ENCODE measurements at regions of chr5 and their contacts with region 1.

Region 1: DNA sequence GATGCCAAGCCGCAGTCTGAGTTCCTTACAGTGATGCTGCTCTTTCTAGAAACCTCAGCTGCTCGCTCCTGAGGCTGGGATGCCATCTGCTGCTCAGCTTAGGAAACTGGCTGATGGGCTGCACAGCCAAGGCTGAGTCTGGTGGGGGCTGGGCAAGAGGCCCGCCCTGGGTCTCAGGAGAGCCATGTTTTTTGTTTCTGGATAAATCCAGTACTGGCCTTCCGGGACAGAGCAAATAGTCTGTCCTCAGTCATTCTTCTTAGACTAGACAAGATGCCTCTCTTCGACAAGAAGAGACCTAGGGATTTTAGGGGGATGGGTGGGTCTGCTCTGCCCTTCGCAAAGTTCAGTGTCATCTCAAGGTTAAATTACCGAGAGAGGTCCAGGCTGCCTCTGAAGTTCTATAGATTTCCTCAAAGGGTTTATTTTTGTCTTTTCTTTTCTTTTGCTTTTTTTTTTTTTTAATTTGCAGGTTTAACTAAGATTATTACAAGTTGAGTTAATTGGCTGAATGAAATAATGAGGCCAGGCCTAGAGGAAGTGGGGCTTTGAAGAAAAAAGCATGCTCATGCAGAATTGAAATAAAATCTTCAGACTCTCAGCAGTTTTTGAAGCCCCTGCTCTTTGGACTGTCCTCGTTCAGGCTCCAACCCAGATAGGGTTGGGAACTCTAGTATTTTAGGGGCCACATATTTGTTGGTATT is 30.6 kb upstream of the MATR3 start:
- DNase-seq: peak; percentile 93
- H3K4me3 ChIP-seq: no peak overlapping the region
- H3K27ac ChIP-seq: peak overlapping the region in 3 of 4 donors; percentile 33 to 64 (median 50)
- H3K4me1 ChIP-seq: peaks cover 10 to 18% (median 15%) of the 10 kb centered on the region in 4 donors
- H3K27me3 ChIP-seq: no peaks in the 10 kb centered on the region
- CTCF ChIP-seq: peak; percentile 90 to 98 (median 93)
- EP300 ChIP-seq: no peak
- POLR2A ChIP-seq: no peak

Region 2: DNA sequence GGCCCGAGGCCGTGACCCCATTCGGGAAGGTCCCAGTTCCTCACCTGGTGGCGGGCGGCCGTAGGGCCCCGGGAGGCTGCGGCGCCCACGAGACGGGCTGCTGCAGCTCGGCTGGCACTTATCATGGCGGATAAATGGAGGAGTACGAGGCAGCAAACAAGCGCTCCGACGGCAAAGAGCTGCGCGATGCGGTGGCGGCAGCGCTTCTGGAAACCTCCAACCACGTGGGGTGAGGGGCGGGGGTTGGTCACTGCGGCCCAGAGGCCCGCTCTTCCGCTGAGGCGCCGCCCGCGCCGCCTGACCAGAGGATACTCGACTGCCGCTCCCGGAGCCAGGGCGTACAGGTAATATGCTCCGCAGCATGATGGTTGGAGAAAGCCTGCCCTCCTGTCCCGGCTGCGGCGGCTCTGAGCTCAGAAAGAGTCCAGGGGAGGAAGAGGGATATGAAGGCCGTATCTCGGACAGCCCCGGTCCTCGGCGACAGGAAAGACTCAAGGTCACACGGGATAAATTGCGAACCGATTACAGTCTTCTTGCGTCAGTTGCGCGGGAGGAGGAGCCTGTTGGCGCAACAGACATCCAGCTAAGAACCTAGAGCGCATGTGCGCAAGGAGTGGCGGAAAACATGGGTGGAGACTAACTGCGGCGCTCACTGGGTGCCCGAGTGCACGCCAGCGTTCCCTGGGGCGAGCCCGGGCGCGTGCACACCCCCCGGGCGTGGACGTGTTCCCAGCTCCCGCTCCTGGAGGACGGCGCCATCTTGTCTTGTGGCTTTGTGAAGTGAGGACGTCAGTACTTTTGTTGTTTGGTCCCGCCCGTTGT is 687.5 kb before region 1 on chr5 and contains the start of gene HSPA9:
- intact Hi-C with region 1: loop called (anchors 5 kb)
- DNase-seq: peak; percentile 99
- H3K4me3 ChIP-seq: peak within 1 kb of the TSS; percentile 63 to 92 (median 76)
- H3K27ac ChIP-seq: peak within 1 kb of the TSS; percentile 91 to 98 (median 94)
- H3K4me1 ChIP-seq: peaks cover 20 to 36% (median 28%) of the 10 kb centered on the region in 4 donors
- H3K27me3 ChIP-seq: no peaks in the 10 kb centered on the region
- CTCF ChIP-seq: peak in 2 of 3 experiments; percentile 18 to 24
- EP300 ChIP-seq: peak; percentile 30
- POLR2A ChIP-seq: peak; percentile 87
- total RNA-seq, gene HSPA9: 139 to 250 (median 186) TPM

Region 3: GRCh38 chr5:138641547-138642298 is 621.2 kb before region 1 on chr5:
- intact Hi-C with region 1: loop called (anchors 5 kb)
- DNase-seq: no peak
- H3K4me3 ChIP-seq: no peak overlapping the region
- H3K27ac ChIP-seq: no peak overlapping the region
- H3K4me1 ChIP-seq: peaks cover 0 to 7% (median 2%) of the 10 kb centered on the region in 4 donors
- H3K27me3 ChIP-seq: no peaks in the 10 kb centered on the region
- CTCF ChIP-seq: peak; percentile 42 to 66 (median 51)
- EP300 ChIP-seq: no peak
- POLR2A ChIP-seq: no peak

Region 4: DNA sequence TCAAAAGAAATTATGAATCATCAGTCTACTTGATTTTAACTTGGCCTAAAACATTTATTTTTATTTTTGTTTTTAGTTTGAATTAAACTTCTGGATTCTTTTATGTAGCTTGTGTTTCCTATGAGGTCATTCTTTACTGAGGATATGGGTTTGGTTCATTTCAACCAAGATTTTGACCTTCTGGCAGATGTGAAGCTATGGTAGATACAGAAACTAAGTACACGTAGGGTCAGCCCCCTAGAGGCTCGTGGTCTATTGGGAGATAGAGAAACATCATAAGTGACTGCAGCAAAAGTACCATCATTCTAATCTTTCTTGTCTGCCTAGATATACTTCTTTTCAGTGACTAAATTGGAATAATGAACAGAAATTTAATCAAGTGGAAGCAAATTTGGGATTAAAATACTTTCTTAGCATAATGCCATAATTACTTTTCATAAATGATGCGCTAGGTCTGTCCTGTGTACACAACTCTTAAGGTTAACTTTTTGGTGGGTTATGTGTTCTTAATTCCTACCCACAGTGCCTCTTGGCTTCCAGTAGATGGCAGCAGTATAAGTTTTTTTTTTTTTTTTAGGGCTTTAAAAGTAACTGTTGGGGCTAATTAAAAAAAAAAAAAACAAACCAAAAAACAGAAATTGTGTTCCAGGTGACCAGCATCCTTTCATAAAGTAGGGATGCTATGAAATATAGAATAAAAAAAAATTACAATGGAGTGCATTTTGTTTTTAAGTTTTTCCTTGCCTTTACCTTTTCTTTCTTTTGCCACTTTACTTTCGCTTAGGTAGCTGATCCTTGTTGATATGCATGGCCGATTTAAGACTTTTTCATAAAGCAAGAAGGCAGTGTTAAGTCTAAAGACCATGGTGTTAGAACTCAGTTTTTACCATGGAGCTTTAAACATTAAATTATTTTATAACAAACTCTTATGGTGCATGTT is 437.7 kb before region 1 on chr5:
- intact Hi-C with region 1: loop called (anchors 2 kb)
- DNase-seq: no peak
- H3K4me3 ChIP-seq: no peak overlapping the region
- H3K27ac ChIP-seq: no peak overlapping the region
- H3K4me1 ChIP-seq: peaks cover 25 to 43% (median 33%) of the 10 kb centered on the region in 4 donors
- H3K27me3 ChIP-seq: no peaks in the 10 kb centered on the region
- CTCF ChIP-seq: peak; percentile 35 to 65 (median 58)
- EP300 ChIP-seq: no peak
- POLR2A ChIP-seq: no peak

Region 5: DNA sequence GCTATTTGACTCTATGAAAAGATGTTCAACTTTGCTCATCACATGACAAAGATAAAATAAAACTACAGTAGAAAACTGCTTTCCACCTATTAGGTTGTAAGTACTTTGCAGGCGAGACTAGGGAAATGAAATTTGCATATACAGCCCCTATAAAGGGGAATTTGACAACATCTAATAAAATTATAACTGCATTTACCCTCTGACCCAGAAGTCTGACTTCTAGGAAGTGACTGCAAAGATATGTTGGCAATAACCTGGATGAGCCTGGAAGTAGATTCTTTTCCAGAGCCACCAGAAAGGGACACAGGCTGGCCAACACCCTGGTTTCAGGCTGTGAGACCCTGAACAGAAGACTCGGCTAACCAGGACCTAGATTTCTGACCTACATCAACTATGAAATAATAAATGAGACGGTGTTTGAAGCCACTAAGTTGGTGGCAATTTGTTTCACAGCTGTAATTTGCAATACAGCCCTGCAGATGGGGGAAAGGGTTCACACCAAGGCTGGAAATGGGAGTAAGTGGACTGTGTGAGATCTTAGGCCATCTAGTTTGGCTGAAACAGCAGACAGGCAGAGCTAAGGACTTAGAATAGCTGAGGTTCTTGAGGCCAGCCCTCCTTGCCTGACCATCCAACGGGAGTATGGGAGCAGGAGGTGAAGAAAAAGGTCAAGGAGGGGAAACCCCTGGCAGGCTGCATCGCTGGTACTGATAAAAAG is 171.3 kb before region 1 on chr5:
- intact Hi-C with region 1: loop called (anchors 1 kb)
- DNase-seq: no peak
- H3K4me3 ChIP-seq: no peak overlapping the region
- H3K27ac ChIP-seq: no peak overlapping the region
- H3K4me1 ChIP-seq: peaks cover 9 to 24% (median 17%) of the 10 kb centered on the region in 4 donors
- H3K27me3 ChIP-seq: no peaks in the 10 kb centered on the region
- CTCF ChIP-seq: peak; percentile 54 to 62 (median 60)
- EP300 ChIP-seq: no peak
- POLR2A ChIP-seq: no peak

Region 6: GRCh38 chr5:139358064-139358463 is 95.2 kb after region 1 on chr5:
- intact Hi-C with region 1: no loop called
- DNase-seq: no peak
- H3K4me3 ChIP-seq: no peak overlapping the region
- H3K27ac ChIP-seq: no peak overlapping the region
- H3K4me1 ChIP-seq: peaks cover 6 to 56% (median 34%) of the 10 kb centered on the region in 4 donors
- H3K27me3 ChIP-seq: no peaks in the 10 kb centered on the region
- CTCF ChIP-seq: no peak
- EP300 ChIP-seq: no peak
- POLR2A ChIP-seq: no peak

Measured in esophagus muscularis mucosa (tissue), 4 donors.